BJ (cell line): ENCODE measurements at regions of chr1 and their contacts with region 1.

Region 1: GRCh38 chr1:156927215-156928042 is 7.0 kb downstream of the LRRC71 start:
- DNase-seq: no peak
- H3K4me3 ChIP-seq: peak overlapping the region; percentile 32
- H3K27me3 ChIP-seq: peaks cover 12% of the 10 kb centered on the region
- CTCF ChIP-seq: peak; percentile 89

Region 2: GRCh38 chr1:156781585-156782186 is 145.7 kb before region 1 on chr1:
- CTCF ChIA-PET with region 1: interaction called, 12 read pairs
- POLR2A ChIA-PET with region 1: no interaction called
- DNase-seq: no peak
- H3K4me3 ChIP-seq: no peak overlapping the region
- H3K27me3 ChIP-seq: no peaks in the 10 kb centered on the region
- CTCF ChIP-seq: no peak

Region 3: GRCh38 chr1:156804572-156805243 is 122.7 kb before region 1 on chr1:
- CTCF ChIA-PET with region 1: interaction called, 20 read pairs
- POLR2A ChIA-PET with region 1: no interaction called
- DNase-seq: no peak
- H3K4me3 ChIP-seq: no peak overlapping the region
- H3K27me3 ChIP-seq: no peaks in the 10 kb centered on the region
- CTCF ChIP-seq: no peak

Region 4: GRCh38 chr1:156884560-156885184 is 42.8 kb before region 1 on chr1:
- CTCF ChIA-PET with region 1: interaction called, 298 read pairs
- POLR2A ChIA-PET with region 1: no interaction called
- DNase-seq: no peak
- H3K4me3 ChIP-seq: no peak overlapping the region
- H3K27me3 ChIP-seq: peaks cover 34% of the 10 kb centered on the region
- CTCF ChIP-seq: no peak